Caco-2 (cell line): ENCODE measurements at regions of chr2 and their contacts with region 1.

Region 1: DNA sequence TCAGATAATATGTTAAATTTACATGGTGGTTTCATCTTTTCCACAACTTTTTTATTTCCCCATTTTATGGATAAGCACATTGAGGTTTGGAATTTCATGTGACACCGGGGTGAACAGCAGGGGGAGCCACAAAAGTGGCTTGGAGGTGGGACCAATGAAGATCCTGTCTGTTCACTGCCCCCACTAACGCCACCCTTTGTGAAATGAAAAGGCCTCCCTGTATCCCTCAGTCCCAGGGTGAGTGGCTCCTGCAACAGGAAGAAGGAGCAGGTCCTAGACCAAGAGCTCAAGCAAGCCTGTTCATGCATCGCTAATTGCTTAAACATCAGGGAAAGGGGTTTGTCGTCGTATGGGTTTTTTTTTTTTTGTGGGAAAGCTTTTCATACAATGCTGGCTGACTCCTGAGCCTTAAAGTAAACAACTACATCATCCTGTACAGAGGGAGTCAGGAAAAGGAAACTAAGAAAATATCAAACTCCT is 267.8 kb upstream of the EPAS1 start:
- DNase-seq: no peak
- H3K4me3 ChIP-seq: no peak overlapping the region
- H3K4me3 Mint-ChIP-seq: no peak overlapping the region
- H3K27ac Mint-ChIP-seq: no peak overlapping the region
- H3K4me1 ChIP-seq: no peaks in the 10 kb centered on the region; the same call in 1 of the 2 replicates
- H3K4me1 Mint-ChIP-seq: no peaks in the 10 kb centered on the region
- H3K27me3 ChIP-seq: no peaks in the 10 kb centered on the region
- H3K27me3 Mint-ChIP-seq: peaks cover 2% of the 10 kb centered on the region
- CTCF ChIP-seq: peak in 1 of 2 experiments; percentile 9

Region 2: DNA sequence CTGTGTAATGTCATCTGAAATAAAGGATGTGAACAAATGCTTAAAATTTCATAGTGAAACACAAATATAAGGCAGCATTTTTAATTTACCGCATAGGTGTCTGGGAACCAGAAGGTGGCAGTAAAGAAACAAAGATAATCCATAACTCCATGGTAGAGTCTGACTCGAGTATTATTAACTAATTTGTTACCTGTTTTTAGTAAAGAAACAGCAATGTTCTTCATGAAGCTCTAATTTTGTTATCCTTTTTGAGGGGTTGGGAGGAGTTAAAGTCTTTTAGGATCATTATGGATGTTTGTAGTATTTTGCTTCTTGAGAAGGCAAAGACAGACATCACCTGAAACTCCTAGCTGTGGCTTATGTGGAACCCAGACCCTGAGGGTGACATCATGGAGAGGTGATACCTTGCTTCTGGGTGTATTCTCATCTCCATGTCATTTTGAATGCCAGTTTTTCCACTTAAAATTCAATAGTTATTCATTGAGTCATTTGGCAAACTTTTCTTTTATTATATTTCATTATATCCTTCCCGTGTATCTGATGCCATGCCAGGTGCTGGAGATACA is 18.4 kb before region 1 on chr2:
- CTCF ChIA-PET with region 1: no interaction called
- POLR2A ChIA-PET with region 1: interaction called, 14 read pairs
- intact Hi-C with region 1: no loop called
- DNase-seq: no peak
- H3K4me3 ChIP-seq: no peak overlapping the region
- H3K4me3 Mint-ChIP-seq: no peak overlapping the region
- H3K27ac Mint-ChIP-seq: no peak overlapping the region
- H3K4me1 ChIP-seq: peaks cover 17% of the 10 kb centered on the region
- H3K4me1 Mint-ChIP-seq: peaks cover 16% of the 10 kb centered on the region
- H3K27me3 ChIP-seq: no peaks in the 10 kb centered on the region
- H3K27me3 Mint-ChIP-seq: no peaks in the 10 kb centered on the region
- CTCF ChIP-seq: peak; percentile 61 to 67

Region 3: DNA sequence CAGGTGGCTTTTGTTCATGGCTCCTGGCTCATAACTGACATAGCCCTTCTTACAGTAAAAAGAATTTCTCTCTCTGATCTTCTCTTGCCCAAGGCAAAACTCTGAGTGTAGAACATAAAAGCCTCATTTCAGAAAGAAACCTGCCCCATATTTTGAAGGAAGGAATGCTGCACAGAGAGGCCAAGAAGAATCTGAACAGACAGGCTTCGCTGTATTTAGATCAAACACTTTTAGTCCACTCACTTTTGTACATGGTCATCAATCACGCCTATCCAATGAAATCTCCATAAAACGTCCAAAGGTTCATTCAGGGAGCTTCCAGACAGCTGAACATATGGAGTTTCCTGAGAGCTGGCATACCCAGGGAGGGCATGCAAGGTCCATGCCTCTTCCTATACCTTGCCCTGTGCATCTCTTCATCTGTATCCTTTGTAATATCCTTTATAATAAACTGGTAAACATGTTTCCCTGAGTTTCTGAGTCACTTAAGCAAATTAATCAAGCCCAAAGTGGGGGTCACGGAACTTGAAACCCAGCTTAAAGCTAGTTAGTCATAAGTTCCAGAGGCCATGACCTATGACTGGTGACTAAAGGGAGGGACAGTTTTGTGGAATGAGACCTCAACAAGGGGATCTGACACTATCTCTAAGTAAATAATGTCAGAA is 387.5 kb after region 1 on chr2:
- CTCF ChIA-PET with region 1: no interaction called
- POLR2A ChIA-PET with region 1: no interaction called
- intact Hi-C with region 1: no loop called
- DNase-seq: peak in 1 of 2 experiments; percentile 50
- H3K4me3 ChIP-seq: no peak overlapping the region
- H3K4me3 Mint-ChIP-seq: no peak overlapping the region
- H3K27ac Mint-ChIP-seq: peak overlapping the region; percentile 48
- H3K4me1 ChIP-seq: 0 out of 2 replicates have a peak, but pooled peaks cover 4% of the 10 kb centered on the region
- H3K4me1 Mint-ChIP-seq: no peaks in the 10 kb centered on the region
- H3K27me3 ChIP-seq: no peaks in the 10 kb centered on the region
- H3K27me3 Mint-ChIP-seq: no peaks in the 10 kb centered on the region
- CTCF ChIP-seq: no peak